ENCODE measurements at regions of chr2 and their contacts with region 1.

Region 1: GRCh38 chr2:206981739-206982340 is 42.5 kb downstream of the CPO start:
- DNase-seq: peak; percentile 12 to 61 (median 39)
- ATAC-seq: peak; percentile 67
- H3K4me3 ChIP-seq: no peak overlapping the region
- H3K4me3 Mint-ChIP-seq: no peak overlapping the region
- H3K27ac ChIP-seq: no peak overlapping the region
- H3K27ac Mint-ChIP-seq: peak overlapping the region in 2 of 9 donors; percentile 46 to 63
- H3K4me1 ChIP-seq: peaks cover 0 to 7% of the 10 kb centered on the region in 2 donors
- H3K4me1 Mint-ChIP-seq: peaks cover 0 to 25% (median 11%) of the 10 kb centered on the region in 7 donors
- H3K27me3 ChIP-seq: no peaks in the 10 kb centered on the region
- H3K27me3 Mint-ChIP-seq: peaks cover 0 to 6% (median 0%) of the 10 kb centered on the region in 5 donors

Region 2: GRCh38 chr2:206915121-206915520 is 66.7 kb before region 1 on chr2:
- CTCF ChIA-PET with region 1: no interaction called
- POLR2A ChIA-PET with region 1: no interaction called
- intact Hi-C with region 1: no loop called
- DNase-seq: no peak
- ATAC-seq: peak; percentile 57
- H3K4me3 ChIP-seq: no peak overlapping the region
- H3K4me3 Mint-ChIP-seq: no peak overlapping the region
- H3K27ac ChIP-seq: no peak overlapping the region
- H3K27ac Mint-ChIP-seq: no peak overlapping the region
- H3K4me1 ChIP-seq: no peaks in the 10 kb centered on the region
- H3K4me1 Mint-ChIP-seq: no peaks in the 10 kb centered on the region
- H3K27me3 ChIP-seq: no peaks in the 10 kb centered on the region
- H3K27me3 Mint-ChIP-seq: peaks cover 0 to 7% (median 4%) of the 10 kb centered on the region in 5 donors

Region 3: DNA sequence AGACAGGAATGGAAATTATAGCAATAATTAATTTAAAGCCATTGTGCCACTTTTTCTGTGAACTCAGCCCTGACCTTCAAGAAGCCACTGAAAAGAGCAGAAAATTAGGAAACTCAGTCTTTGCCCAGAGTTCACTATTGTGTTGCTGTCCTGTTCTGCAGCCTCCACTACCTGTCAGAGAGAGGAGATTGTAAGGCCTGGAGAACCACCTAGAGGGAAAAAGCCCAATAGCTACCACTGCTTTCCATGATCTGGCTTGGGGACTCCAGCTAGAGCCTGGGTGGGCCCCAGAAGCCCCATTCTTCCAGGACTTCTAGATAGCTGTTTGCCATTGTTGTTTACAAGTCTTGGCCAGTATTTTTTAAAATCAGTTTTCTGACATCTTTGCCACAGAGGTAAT is 360.0 kb after region 1 on chr2:
- CTCF ChIA-PET with region 1: no interaction called
- POLR2A ChIA-PET with region 1: no interaction called
- intact Hi-C with region 1: loop called in 1 of 2 experiments (anchors 1 kb)
- DNase-seq: peak in 1 of 9 donors; percentile 9
- ATAC-seq: no peak
- H3K4me3 ChIP-seq: no peak overlapping the region
- H3K4me3 Mint-ChIP-seq: no peak overlapping the region
- H3K27ac ChIP-seq: no peak overlapping the region
- H3K27ac Mint-ChIP-seq: no peak overlapping the region
- H3K4me1 ChIP-seq: peaks cover 0 to 8% of the 10 kb centered on the region in 2 donors
- H3K4me1 Mint-ChIP-seq: peaks cover 7 to 21% (median 9%) of the 10 kb centered on the region in 7 donors
- H3K27me3 ChIP-seq: no peaks in the 10 kb centered on the region
- H3K27me3 Mint-ChIP-seq: no peaks in the 10 kb centered on the region

Measured in naive thymus-derived CD4-positive, alpha-beta T cell (primary cell).